ENCODE measurements at regions of chr15 and their contacts with region 1.

Region 1: DNA sequence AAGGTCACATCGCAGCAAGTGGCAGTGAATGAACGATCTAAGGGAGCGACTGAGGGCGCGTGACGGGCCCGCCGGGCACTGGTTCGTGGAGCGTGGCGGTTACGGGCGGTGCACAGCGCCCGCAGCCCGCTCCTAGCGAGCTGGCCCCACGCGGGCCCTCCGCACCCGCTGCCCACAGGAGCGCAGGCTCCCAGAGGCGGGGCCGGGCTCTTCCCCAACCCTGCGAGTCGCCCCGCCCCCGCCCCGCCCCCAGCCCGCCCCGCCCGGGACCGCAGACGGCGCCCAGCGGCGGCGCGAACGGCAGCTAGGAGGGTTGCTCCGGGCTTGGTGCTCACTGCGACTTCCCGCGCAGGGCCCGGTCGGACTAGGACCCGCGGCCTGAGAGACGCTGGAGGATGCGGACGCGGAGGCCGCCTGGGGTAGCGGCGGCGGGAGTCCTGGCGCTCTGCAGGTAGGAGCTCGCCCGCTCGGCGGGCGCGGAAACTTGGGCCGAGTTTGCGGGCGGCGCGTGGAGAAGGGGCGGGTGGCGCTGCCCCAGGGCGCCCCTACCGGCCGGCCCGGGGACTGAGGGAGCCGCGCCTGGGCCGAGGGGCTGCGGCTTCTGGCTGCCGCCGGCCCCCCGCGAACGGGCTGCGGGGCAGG is at the start of gene C15orf39:
- DNase-seq: peak; percentile 92
- ATAC-seq: peak; percentile 82
- total RNA-seq, gene C15orf39: 15.0 TPM

Region 2: DNA sequence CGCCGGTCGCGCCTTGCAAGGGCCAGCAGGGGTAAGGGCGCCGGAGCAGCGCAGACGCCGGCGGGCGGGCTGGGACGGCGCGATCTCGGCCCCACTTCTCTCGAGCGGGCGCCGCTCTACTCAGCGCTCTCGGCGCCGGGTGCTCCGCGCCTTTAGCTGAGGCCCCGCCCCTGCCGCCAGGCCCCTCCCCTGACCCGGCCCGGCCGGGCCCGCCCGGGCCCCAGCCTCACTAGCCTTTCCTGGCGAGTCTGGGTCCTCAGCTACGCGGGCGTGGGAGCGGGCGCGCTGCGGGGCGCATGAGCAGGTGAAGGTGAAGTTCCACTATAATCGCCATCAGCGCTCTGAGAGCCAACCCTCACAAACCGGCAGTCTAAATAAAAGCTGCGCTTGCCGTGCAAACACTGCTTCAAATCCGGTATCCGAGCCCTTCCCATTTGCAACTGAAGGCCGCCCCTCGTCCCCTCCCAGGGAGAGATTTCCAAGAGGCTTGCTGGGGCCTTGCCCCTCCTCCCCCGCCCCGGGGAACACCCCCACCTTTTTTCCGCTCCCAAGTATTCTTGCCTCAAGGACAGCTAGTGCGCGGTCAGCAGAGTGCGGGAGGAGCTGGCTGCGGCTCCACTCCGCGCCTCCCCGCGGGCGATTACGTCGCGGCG is 245.0 kb before region 1 on chr15 and contains the start of gene RPP25:
- intact Hi-C with region 1: loop called (anchors 5 kb)
- DNase-seq: peak; percentile 89
- ATAC-seq: peak; percentile 92
- total RNA-seq, gene RPP25: 2.7 TPM

Region 3: DNA sequence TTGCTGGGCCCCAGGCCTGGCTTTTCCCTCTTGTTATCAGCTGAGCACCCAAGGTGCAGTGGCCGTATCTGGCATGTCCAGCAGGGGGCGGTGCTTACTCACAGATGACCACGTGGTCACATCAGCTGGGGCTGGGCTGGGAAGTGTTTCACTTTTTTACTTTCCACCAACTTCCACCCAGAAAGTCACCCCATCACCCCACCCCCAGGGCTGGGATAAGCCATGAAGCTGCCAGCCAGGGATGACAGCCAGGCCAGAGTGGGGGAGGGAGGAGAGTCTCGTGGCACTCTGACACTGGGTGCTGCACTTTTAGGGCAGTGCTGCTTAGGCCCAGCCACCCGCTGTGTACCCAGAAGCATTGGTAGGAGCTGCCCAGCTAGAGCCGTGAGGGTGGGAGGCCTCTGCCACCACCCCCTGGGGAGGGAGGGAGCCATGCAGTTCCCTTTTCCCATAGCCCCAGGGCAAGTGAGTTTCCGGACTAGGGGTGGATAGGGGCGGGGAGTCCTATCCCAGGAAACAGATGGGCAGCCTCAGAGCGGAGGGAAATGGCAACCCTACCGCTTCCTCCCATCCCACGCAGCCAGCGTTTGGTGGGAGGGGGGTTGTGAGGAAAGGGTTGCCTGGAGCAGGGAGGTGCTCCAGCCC is 172.2 kb before region 1 on chr15:
- intact Hi-C with region 1: loop called (anchors 1 kb)
- DNase-seq: peak; percentile 97
- ATAC-seq: peak; percentile 88

Region 4: GRCh38 chr15:75042730-75043508 is 158.8 kb before region 1 on chr15:
- intact Hi-C with region 1: loop called (anchors 1 kb)
- DNase-seq: peak; percentile 96
- ATAC-seq: peak; percentile 63

Region 5: GRCh38 chr15:75178171-75179075 is 23.3 kb before region 1 on chr15:
- intact Hi-C with region 1: loop called (anchors 2 kb)
- DNase-seq: no peak
- ATAC-seq: peak; percentile 35

Measured in Right ventricle myocardium inferior (tissue), 1 donor.